A549 (cell line): ENCODE measurements at regions of chr1 and their contacts with region 1.

Region 1: DNA sequence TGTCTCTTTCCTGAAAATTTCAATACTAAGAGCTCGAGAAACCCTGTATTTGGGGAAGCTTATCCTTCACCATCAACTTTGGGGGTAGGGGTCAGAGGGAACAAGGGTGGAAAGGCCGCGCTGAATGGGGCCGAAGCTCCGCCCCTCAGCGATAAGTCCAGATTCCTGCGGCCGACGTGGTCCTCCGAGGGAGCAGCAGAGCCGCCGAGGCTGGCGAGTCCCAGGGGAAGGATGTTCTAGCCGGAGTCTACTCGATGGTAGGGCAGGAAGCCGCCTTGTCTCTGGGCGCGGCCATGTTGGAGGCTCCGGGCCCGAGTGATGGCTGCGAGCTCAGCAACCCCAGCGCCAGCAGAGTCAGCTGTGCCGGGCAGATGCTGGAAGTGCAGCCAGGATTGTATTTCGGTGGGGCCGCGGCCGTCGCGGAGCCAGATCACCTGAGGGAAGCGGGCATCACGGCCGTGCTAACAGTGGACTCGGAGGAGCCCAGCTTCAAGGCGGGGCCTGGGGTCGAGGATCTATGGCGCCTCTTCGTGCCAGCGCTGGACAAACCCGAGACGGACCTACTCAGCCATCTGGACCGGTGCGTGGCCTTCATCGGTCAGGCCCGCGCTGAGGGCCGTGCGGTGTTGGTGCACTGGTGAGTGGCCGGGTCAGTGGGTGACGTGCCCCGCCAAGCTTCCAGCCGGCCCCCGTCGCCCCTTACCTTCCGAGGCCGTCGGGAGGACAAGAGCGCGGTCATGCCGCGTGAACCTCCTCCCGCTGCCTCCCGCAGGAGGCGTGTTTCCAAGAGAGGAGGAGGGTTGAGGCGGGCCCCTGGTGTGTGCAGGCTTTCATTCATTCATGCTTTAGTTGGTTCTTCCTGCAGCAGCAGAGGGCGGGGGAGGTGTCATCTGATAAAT is at the start of gene DUSP12:
- DNase-seq: peak; percentile 89 to 97
- ATAC-seq: peak; percentile 98 to 99
- H3K4me3 ChIP-seq: peak within 1 kb of the TSS; percentile 62
- H3K27ac ChIP-seq: peak within 1 kb of the TSS; percentile 87 to 98
- H3K4me1 ChIP-seq: peaks cover 14% of the 10 kb centered on the region
- CTCF ChIP-seq: peak; percentile 24; the same call in 1 of the 3 replicates
- EP300 ChIP-seq: no peak
- POLR2A ChIP-seq: peak; percentile 66
- RAD21 ChIP-seq: no peak
- polyA plus RNA-seq, gene DUSP12: 79.2 and 96.3 TPM in 2 replicates

Region 2: DNA sequence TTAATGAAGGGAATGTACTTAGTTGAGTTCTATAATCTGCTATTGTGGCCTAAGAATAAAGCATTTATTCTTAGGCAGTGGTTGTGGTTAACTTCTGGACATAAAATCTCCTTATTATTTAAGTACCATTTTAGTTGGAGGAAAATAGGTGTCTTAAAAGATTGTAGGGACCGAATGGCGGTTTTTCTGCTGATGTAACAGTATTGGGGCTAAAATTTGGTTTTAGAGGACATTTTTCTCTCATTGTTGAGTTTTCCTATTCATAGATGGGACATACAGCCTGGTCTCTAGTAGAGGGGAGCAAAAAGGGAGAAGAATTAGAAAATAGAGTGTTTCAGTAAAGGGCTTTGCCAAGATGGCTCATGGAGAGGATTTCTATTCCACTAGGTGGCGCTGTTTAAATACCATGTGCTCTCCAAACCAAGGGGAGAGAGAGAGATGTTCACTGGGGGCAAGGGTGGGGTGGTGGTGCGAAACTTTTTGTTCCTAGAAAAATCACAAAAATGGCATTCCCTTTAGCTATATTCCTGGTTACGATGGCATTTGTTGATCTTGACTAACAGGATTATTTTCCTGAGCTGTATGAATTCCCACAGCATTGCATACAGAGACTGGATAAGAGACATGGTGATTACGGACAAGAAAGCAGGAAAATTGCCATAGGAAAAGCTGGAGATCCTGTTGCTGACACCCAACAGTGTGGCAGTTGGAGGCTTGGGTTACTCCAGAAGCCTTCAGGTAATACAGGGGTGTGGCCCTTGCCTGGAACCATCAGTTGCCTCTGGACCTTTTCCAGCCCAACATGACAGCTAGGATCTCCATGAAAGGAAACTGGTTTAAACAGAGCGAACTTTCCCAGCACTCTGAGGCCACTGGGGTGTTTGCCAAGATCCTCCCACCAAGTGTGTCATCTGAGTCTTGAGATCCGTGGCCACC is 262.7 kb before region 1 on chr1:
- CTCF ChIA-PET with region 1: interaction called, 10 read pairs
- POLR2A ChIA-PET with region 1: no interaction called
- DNase-seq: peak; percentile 48 to 66
- ATAC-seq: peak; percentile 71 to 85; a peak in 4 of 6 replicates
- H3K4me3 ChIP-seq: no peak overlapping the region
- H3K27ac ChIP-seq: no peak overlapping the region
- H3K4me1 ChIP-seq: peaks cover 4% of the 10 kb centered on the region; the same call in 1 of the 3 replicates
- CTCF ChIP-seq: peak; percentile 77
- EP300 ChIP-seq: no peak
- POLR2A ChIP-seq: no peak
- RAD21 ChIP-seq: peak; percentile 71 to 82

Region 3: GRCh38 chr1:161726596-161727457 is 22.9 kb before region 1 on chr1:
- CTCF ChIA-PET with region 1: interaction called, 3 read pairs
- POLR2A ChIA-PET with region 1: interaction called, 19 read pairs
- DNase-seq: peak; percentile 76 to 89
- ATAC-seq: peak; percentile 82 to 86
- H3K4me3 ChIP-seq: peak overlapping the region; percentile 73
- H3K27ac ChIP-seq: peak overlapping the region; percentile 90 to 97
- H3K4me1 ChIP-seq: peaks cover 15% of the 10 kb centered on the region; the same call in 2 of the 3 replicates
- CTCF ChIP-seq: no peak
- EP300 ChIP-seq: no peak
- POLR2A ChIP-seq: peak; percentile 96
- RAD21 ChIP-seq: no peak

Region 4: DNA sequence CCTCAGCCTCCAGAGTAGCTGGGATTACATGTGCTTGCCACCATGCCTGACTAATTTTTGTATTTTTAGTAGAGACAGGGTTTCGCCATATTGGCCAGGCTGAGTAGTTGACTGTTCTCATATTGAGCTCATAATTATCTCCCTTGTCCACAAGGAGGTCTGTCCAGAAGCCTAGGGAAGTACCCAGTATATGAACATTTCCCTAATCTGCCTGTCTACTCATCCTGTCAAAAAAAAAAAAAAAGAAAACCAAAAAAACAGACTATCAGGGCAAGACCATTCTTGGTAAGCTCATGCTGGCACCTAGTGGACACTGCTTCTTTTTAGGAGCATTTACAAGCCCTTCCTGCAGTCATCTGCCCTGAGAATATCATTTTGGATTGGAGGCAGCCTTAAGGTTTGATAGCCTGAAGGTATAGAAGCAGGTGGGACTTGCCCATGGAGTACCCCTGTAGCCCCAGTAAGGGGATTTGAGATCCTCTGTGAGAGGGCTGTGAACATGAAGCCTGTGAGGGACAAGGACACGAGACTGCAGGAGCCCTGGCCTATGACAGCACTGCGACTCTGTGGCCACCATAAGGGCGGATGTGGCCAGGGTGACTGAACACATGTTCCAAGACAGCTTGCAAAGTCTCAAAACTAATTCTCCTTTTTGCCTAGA is 11.0 kb before region 1 on chr1:
- CTCF ChIA-PET with region 1: interaction called, 49 read pairs
- POLR2A ChIA-PET with region 1: interaction called, 6 read pairs
- DNase-seq: peak; percentile 18 to 85
- ATAC-seq: peak; percentile 87 to 92
- H3K4me3 ChIP-seq: no peak overlapping the region
- H3K27ac ChIP-seq: no peak overlapping the region
- H3K4me1 ChIP-seq: peaks cover 19% of the 10 kb centered on the region
- CTCF ChIP-seq: peak; percentile 80
- EP300 ChIP-seq: no peak
- POLR2A ChIP-seq: no peak
- RAD21 ChIP-seq: peak; percentile 83 to 95

Region 5: DNA sequence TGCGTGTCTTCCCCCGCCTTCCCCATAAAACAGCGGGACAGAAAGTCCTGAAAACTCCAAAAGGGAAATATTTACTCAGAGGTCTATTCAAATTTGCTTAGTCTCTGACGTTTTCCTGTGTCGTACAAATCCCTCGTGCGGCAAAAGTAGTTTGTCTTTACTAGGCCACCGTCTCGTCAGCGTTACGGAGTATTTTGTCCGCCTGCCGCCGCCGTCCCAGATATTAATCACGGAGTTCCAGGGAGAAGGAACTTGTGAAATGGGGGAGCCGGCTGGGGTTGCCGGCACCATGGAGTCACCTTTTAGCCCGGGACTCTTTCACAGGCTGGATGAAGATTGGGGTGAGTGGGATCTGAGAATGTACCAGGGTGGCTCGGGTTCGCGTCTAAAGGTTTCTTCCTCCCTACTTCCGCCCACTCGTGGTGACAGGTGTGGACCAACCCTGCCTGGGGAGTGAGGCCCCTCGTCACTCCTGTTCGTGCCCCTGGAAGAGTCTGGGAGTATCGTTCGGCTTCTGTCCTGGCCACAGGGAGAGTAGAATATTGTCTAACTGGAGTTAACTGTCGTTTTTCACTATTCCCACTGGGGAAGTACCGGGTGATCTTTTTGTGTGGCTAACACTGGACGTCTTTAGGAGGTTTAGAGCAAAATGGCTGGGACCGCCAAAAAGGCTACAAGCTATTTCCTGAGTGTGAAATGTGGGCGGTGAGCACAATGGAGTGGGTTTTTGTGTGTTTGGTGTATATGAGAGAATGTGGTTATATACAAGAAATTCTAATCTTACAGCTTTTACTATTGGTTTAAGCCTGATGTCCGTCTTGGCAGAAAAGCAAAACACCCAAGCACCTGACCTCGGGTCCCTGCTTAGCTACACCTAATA is 16.6 kb after region 1 on chr1 and contains the start of gene ATF6:
- CTCF ChIA-PET with region 1: interaction called, 11 read pairs
- POLR2A ChIA-PET with region 1: interaction called, 5 read pairs
- DNase-seq: peak; percentile 78 to 97
- ATAC-seq: peak; percentile 75 to 84
- H3K4me3 ChIP-seq: peak within 1 kb of the TSS; percentile 93
- H3K27ac ChIP-seq: peak within 1 kb of the TSS; percentile 92 to 94
- H3K4me1 ChIP-seq: peaks cover 10% of the 10 kb centered on the region; the same call in 1 of the 3 replicates
- CTCF ChIP-seq: no peak
- EP300 ChIP-seq: 0 out of 5 replicates have a peak, but pooled peaks of 1 of the 2 experiments have one; percentile 19
- POLR2A ChIP-seq: peak; percentile 43
- RAD21 ChIP-seq: no peak
- polyA plus RNA-seq, gene ATF6: 26.8 and 28.0 TPM in 2 replicates

Region 6: GRCh38 chr1:161781995-161782394 is 32.2 kb after region 1 on chr1:
- CTCF ChIA-PET with region 1: no interaction called
- POLR2A ChIA-PET with region 1: no interaction called
- DNase-seq: no peak
- ATAC-seq: no peak
- H3K4me3 ChIP-seq: no peak overlapping the region
- H3K27ac ChIP-seq: no peak overlapping the region
- H3K4me1 ChIP-seq: peaks cover 4% of the 10 kb centered on the region; the same call in 1 of the 3 replicates
- CTCF ChIP-seq: no peak
- EP300 ChIP-seq: no peak
- POLR2A ChIP-seq: no peak
- RAD21 ChIP-seq: no peak

Region 7: DNA sequence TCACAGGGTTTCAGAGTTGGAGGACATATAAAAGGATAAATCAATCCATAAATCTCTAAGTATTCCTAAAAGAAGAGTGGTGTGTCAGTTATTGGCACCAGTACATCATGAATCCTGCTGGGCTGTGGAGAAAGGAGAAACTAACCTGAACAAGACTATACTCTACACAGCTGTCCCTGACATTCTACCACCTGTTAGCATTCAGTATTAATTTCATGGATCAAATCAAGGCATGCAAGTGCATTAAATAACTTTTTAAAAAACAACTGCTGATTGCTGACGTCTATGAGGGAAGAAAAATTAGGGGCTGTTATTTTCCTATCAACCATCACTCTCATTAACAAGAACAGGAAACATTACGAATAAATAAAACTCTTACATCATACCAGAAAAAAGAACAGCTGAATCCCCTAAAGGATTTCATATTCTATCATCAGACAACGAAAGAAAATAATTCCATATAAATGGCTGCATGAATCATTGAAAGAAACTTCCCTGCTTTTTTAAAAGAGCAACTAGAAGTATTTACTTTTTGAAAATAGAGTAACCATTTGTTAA is 138.1 kb after region 1 on chr1:
- CTCF ChIA-PET with region 1: no interaction called
- POLR2A ChIA-PET with region 1: no interaction called
- DNase-seq: no peak
- ATAC-seq: no peak
- H3K4me3 ChIP-seq: no peak overlapping the region
- H3K27ac ChIP-seq: no peak overlapping the region
- H3K4me1 ChIP-seq: peaks cover 26% of the 10 kb centered on the region
- CTCF ChIP-seq: no peak
- EP300 ChIP-seq: no peak
- POLR2A ChIP-seq: no peak
- RAD21 ChIP-seq: no peak

Region 8: DNA sequence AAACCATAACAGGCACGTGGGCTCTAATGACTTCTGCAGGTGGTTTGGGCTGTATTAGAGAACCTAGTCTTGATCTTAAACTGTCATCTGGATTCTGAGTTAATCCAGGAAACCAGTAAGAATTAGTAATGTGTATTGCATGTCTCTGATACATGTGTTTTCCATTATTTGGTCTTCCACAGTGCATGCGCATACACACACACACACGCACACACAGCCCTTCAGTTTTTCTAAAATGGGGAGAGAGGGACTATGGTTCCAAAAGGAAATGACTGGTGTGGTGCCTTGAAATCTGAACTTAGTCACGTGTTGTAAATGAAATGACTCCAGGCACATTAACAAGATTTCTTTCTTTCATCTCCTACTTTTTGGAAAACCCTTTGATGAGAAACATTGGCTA is 206.3 kb after region 1 on chr1:
- CTCF ChIA-PET with region 1: no interaction called
- POLR2A ChIA-PET with region 1: no interaction called
- DNase-seq: no peak
- ATAC-seq: no peak
- H3K4me3 ChIP-seq: no peak overlapping the region
- H3K27ac ChIP-seq: no peak overlapping the region
- H3K4me1 ChIP-seq: peaks cover 10% of the 10 kb centered on the region
- CTCF ChIP-seq: no peak
- EP300 ChIP-seq: no peak
- POLR2A ChIP-seq: no peak
- RAD21 ChIP-seq: no peak

Region 9: DNA sequence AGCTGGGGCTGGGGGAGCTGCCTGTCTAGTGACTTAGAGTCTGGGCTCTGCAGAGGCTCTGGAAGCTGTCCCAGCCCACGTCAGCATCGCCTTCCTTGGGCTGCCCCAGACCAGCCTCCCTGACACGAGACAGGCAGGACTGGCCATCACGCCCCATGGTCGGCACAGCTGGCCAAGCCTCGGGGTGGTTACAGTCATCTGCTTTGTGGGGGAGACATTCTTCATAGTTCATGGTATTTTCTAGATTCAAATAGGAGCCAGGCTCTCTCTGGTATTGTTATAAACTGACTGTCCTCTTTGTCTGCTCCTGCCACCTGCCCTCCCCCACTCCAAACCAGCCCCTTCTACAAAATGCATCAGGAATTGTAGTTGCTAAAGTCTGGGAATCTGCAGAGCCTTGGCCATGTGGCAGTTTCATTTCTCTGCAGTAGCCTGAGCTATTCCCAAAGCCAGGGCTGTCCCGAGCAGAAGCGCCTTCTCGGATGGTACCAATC is 244.5 kb after region 1 on chr1:
- CTCF ChIA-PET with region 1: no interaction called
- POLR2A ChIA-PET with region 1: no interaction called
- DNase-seq: no peak
- ATAC-seq: no peak
- H3K4me3 ChIP-seq: no peak overlapping the region
- H3K27ac ChIP-seq: no peak overlapping the region
- H3K4me1 ChIP-seq: no peaks in the 10 kb centered on the region
- CTCF ChIP-seq: no peak
- EP300 ChIP-seq: no peak
- POLR2A ChIP-seq: no peak
- RAD21 ChIP-seq: no peak

Region 10: DNA sequence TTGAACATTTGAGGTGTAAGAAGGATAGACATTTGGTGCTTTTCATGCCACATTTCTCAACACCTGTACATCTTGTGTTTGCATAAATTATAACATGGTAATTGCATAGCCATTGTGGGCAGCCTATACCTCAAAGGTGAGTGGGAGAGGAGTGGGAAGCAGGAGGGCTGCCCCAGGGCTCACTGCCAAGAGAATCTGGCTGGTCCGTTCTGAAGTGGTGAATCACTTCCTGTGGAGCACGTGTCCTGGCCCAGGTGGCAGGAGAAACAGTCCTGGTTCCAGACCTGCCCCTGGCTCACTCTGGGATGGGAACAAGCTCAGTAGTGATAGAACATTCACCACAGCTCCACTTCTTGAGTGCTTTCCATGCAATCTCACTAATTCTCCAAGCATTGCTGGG is 285.5 kb after region 1 on chr1:
- CTCF ChIA-PET with region 1: interaction called, 11 read pairs
- POLR2A ChIA-PET with region 1: no interaction called
- DNase-seq: no peak
- ATAC-seq: no peak
- H3K4me3 ChIP-seq: no peak overlapping the region
- H3K27ac ChIP-seq: no peak overlapping the region
- H3K4me1 ChIP-seq: peaks cover 6% of the 10 kb centered on the region; the same call in 2 of the 3 replicates
- CTCF ChIP-seq: no peak
- EP300 ChIP-seq: no peak
- POLR2A ChIP-seq: no peak
- RAD21 ChIP-seq: no peak